CD8-positive, alpha-beta memory T cell (primary cell): ENCODE measurements at regions of chr10 and their contacts with region 1.

Region 1: DNA sequence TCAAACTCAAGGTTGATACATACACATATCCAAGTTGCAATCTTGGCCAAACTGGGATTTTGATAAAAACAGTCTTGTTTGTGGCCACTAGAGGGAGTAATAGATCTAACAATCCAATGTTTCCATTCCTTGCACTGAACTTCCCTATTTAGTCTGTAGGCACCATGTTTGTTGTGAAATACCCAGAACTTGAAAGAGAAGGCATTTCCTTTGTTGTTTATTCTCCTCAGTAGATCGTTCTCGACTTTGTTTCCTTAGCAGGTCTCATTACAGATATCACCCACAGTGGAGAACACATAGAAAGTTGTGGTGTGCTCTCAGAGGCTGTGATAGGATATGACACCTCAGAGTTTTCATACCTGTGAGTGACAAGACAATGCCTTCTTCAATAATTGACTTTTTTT is 70.3 kb upstream of the MXI1 start:
- DNase-seq: peak in 2 of 5 donors; percentile 59 to 64
- H3K4me3 ChIP-seq: no peak overlapping the region
- H3K4me3 Mint-ChIP-seq: no peak overlapping the region
- H3K27ac ChIP-seq: no peak overlapping the region
- H3K27ac Mint-ChIP-seq: peak overlapping the region in 6 of 8 donors; percentile 0 to 82 (median 20)
- H3K4me1 ChIP-seq: peaks cover 5% of the 10 kb centered on the region
- H3K4me1 Mint-ChIP-seq: peaks cover 18 to 30% (median 27%) of the 10 kb centered on the region in 3 donors
- H3K27me3 ChIP-seq: no peaks in the 10 kb centered on the region
- H3K27me3 Mint-ChIP-seq: peaks cover 0 to 2% of the 10 kb centered on the region in 2 donors

Region 2: DNA sequence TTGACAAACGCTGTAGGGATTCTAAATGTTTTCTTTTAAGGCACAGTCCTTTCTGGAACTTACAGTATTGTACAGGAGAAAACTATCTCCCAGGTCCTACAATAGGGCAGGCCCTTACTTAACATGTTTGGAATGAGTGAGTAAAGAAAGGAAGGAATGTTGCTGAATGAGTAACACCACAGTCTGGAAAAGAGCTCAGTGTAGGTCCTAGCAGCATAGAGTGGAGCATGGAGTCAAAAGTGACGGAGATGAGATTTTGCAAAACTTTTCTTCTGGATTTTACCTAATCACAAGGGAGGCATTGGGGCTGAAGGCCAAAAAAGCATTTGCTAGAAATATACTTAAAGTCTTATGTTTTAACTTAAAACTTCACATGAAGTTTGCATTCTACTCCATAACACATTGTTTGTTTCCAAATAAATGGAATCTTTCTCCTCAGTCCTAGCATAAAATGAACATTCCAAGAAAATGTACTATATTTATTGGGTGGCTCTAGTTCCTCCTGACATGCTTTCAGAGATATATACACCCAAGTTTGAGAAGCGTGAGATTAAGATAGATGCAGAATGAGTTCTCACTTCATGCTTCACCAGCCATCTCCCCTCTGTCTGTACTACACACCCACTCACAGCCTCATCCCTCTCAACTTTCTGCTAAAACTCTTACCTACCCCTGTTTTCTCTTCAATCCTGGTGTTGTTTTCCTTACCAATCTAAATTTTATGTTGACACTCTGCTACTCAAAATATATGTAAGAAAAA is 149.5 kb before region 1 on chr10:
- CTCF ChIA-PET with region 1: no interaction called
- POLR2A ChIA-PET with region 1: no interaction called
- DNase-seq: no peak
- H3K4me3 ChIP-seq: no peak overlapping the region
- H3K4me3 Mint-ChIP-seq: no peak overlapping the region
- H3K27ac ChIP-seq: no peak overlapping the region
- H3K27ac Mint-ChIP-seq: peak overlapping the region in 1 of 8 donors; percentile 45
- H3K4me1 ChIP-seq: no peaks in the 10 kb centered on the region
- H3K4me1 Mint-ChIP-seq: no peaks in the 10 kb centered on the region
- H3K27me3 ChIP-seq: no peaks in the 10 kb centered on the region
- H3K27me3 Mint-ChIP-seq: peaks cover 2 to 6% of the 10 kb centered on the region in 2 donors

Region 3: DNA sequence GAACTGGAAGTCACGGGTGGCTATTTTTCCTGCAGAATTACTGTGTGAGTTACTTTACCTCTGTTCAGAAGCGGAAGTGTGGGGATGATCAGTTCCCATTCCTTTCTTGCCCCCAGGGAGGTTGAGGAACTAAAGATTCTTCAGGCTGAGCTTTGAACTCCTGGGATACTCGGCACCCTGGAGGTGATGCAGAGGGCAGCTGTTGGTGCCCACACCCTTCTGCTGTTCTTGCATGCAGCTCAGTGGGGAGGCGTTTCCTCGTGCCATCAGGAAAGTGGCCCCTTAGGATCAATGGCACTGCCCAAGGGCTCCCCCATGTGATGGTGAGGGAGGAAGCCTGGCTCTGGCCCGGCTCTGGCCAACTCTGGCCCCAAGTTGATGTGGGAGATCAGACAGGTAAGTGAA is 25.6 kb after region 1 on chr10:
- CTCF ChIA-PET with region 1: interaction called, 10 read pairs
- POLR2A ChIA-PET with region 1: interaction called, 5 read pairs
- DNase-seq: no peak
- H3K4me3 ChIP-seq: no peak overlapping the region
- H3K4me3 Mint-ChIP-seq: no peak overlapping the region
- H3K27ac ChIP-seq: no peak overlapping the region
- H3K27ac Mint-ChIP-seq: no peak overlapping the region
- H3K4me1 ChIP-seq: peaks cover 4% of the 10 kb centered on the region
- H3K4me1 Mint-ChIP-seq: peaks cover 8 to 12% (median 10%) of the 10 kb centered on the region in 3 donors
- H3K27me3 ChIP-seq: peaks cover 60% of the 10 kb centered on the region
- H3K27me3 Mint-ChIP-seq: peaks cover 74 to 84% of the 10 kb centered on the region in 2 donors

Region 4: DNA sequence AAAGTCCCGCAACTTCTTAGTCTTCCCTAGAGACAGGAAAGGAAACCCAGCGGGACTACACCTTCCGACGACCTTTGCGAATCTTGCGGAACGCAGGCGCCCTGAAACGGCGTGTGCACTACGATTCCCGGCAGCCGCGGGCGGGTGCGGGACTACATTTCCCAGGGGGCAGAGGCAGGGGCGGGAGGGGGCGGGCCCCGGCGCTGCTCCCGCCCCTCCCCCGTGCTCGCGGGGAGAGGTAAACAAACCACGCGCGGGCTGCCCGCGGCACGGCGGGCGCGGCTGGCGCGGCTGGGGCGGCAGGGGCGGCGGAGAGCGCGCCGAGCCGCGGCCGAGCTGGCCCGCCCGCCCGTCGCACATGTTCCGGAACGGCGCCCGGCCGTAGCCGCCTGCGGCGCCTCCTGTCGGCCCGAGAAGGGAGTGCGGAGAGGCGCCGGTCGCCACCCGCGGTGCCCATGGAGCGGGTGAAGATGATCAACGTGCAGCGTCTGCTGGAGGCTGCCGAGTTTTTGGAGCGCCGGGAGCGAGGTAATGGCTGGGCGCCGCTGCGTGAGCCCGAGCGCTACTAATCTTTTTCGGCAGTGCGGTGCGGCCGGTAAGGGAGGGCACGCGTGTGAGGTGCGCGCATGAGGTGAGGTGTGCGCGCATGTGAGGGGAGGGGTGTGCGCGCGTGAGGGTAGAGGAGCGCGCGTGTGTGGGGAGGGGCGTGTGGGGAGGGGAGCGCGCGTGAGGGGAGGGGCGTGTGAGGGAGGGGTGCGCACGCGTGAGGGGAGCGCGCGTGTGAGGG is 88.8 kb after region 1 on chr10:
- CTCF ChIA-PET with region 1: interaction called, 14 read pairs
- POLR2A ChIA-PET with region 1: no interaction called
- DNase-seq: peak; percentile 81 to 91 (median 86)
- H3K4me3 ChIP-seq: peak overlapping the region; percentile 63
- H3K4me3 Mint-ChIP-seq: peak overlapping the region; percentile 92 to 98 (median 95)
- H3K27ac ChIP-seq: peak overlapping the region; percentile 49
- H3K27ac Mint-ChIP-seq: peak overlapping the region; percentile 92 to 98 (median 94)
- H3K4me1 ChIP-seq: peaks cover 22% of the 10 kb centered on the region
- H3K4me1 Mint-ChIP-seq: peaks cover 30 to 51% (median 41%) of the 10 kb centered on the region in 3 donors
- H3K27me3 ChIP-seq: no peaks in the 10 kb centered on the region
- H3K27me3 Mint-ChIP-seq: peaks cover 0 to 3% of the 10 kb centered on the region in 2 donors

Region 5: DNA sequence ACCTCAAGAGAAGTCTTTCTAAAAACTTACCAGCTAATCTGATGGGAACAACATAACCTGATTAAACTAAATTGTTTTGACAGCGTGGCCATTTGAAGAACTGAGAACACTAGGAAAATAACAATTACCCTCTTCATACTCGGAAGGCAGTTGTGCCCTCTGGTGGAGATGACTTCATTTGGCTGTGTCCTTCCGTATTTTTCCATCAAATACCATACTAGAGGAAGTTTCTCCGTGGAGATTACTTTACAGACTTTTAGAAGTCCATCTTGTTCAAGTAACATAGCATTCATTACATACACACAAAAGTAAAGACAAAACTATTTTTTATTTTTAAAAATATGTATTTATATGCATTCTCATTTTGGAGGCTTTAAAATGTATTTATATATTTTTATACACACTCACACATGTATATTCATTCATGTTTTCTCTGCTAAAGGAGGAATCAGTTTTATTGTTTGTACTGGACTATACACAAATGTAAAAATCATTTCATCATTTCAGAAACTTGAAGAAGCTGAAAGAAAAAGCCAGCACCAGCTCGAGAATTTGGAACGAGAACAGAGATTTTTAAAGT is 142.4 kb after region 1 on chr10:
- CTCF ChIA-PET with region 1: interaction called, 60 read pairs
- POLR2A ChIA-PET with region 1: interaction called, 3 read pairs
- DNase-seq: peak in 4 of 5 donors; percentile 21 to 57 (median 36)
- H3K4me3 ChIP-seq: no peak overlapping the region
- H3K4me3 Mint-ChIP-seq: no peak overlapping the region
- H3K27ac ChIP-seq: no peak overlapping the region
- H3K27ac Mint-ChIP-seq: no peak overlapping the region
- H3K4me1 ChIP-seq: peaks cover 11% of the 10 kb centered on the region
- H3K4me1 Mint-ChIP-seq: peaks cover 20 to 29% (median 26%) of the 10 kb centered on the region in 3 donors
- H3K27me3 ChIP-seq: no peaks in the 10 kb centered on the region
- H3K27me3 Mint-ChIP-seq: no peaks in the 10 kb centered on the region

Region 6: GRCh38 chr10:110304780-110305421 is 167.8 kb after region 1 on chr10 and contains the start of gene SMNDC1:
- CTCF ChIA-PET with region 1: interaction called, 14 read pairs
- POLR2A ChIA-PET with region 1: interaction called, 3 read pairs
- DNase-seq: peak; percentile 95 to 98 (median 96)
- H3K4me3 ChIP-seq: peak within 1 kb of the TSS; percentile 70
- H3K4me3 Mint-ChIP-seq: peak within 1 kb of the TSS; percentile 93 to 99 (median 98)
- H3K27ac ChIP-seq: peak within 1 kb of the TSS; percentile 80
- H3K27ac Mint-ChIP-seq: peak within 1 kb of the TSS; percentile 92 to 99 (median 99)
- H3K4me1 ChIP-seq: peaks cover 50% of the 10 kb centered on the region
- H3K4me1 Mint-ChIP-seq: peaks cover 49 to 59% (median 55%) of the 10 kb centered on the region in 3 donors
- H3K27me3 ChIP-seq: no peaks in the 10 kb centered on the region
- H3K27me3 Mint-ChIP-seq: peaks cover 0 to 4% of the 10 kb centered on the region in 2 donors
- total RNA-seq, gene SMNDC1: 54.9 to 60.1 TPM